Activated B cell treated with CpG ODN at 0.5 μM for 24 hours (primary cell): ENCODE measurements at regions of chr1 and their contacts with region 1.

Region 1: DNA sequence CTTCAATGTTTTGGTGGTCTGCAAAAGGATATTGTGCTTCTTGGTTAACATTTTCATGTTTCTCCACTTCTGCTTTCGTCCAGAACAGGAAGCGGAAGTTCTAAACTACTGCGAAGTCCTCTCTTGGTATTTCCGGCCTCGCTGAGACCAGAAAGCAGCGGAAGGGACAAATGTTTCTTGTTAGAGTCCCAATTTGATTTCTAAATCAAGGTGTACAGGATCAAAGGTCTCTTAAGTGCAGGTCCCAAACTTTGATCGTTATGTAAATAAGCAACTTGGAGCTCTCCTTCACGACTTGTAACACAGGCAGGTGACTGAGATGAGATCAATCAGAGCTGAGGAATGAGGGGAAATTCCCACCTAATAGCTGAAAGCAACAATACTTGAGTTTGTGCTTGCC is 40.1 kb upstream of the HMCN1 start:
- DNase-seq: no peak
- ATAC-seq: peak; percentile 82
- H3K4me3 Mint-ChIP-seq: peak overlapping the region; percentile 86
- H3K27ac Mint-ChIP-seq: peak overlapping the region; percentile 98
- H3K4me1 Mint-ChIP-seq: peaks cover 22% of the 10 kb centered on the region
- H3K27me3 Mint-ChIP-seq: peaks cover 9% of the 10 kb centered on the region
- CTCF ChIP-seq: no peak

Region 2: GRCh38 chr1:184754476-184755225 is 939.4 kb before region 1 on chr1 and contains the start of gene EDEM3:
- CTCF ChIA-PET with region 1: no interaction called
- POLR2A ChIA-PET with region 1: no interaction called
- intact Hi-C with region 1: loop called (anchors 2 kb)
- DNase-seq: peak; percentile 90
- ATAC-seq: peak; percentile 95
- H3K4me3 Mint-ChIP-seq: peak within 1 kb of the TSS; percentile 95
- H3K27ac Mint-ChIP-seq: peak within 1 kb of the TSS; percentile 86
- H3K4me1 Mint-ChIP-seq: peaks cover 23% of the 10 kb centered on the region
- H3K27me3 Mint-ChIP-seq: peaks cover under 1% of the 10 kb centered on the region
- CTCF ChIP-seq: no peak
- total RNA-seq, gene EDEM3: 11.5 and 16.2 TPM in 2 replicates

Region 3: DNA sequence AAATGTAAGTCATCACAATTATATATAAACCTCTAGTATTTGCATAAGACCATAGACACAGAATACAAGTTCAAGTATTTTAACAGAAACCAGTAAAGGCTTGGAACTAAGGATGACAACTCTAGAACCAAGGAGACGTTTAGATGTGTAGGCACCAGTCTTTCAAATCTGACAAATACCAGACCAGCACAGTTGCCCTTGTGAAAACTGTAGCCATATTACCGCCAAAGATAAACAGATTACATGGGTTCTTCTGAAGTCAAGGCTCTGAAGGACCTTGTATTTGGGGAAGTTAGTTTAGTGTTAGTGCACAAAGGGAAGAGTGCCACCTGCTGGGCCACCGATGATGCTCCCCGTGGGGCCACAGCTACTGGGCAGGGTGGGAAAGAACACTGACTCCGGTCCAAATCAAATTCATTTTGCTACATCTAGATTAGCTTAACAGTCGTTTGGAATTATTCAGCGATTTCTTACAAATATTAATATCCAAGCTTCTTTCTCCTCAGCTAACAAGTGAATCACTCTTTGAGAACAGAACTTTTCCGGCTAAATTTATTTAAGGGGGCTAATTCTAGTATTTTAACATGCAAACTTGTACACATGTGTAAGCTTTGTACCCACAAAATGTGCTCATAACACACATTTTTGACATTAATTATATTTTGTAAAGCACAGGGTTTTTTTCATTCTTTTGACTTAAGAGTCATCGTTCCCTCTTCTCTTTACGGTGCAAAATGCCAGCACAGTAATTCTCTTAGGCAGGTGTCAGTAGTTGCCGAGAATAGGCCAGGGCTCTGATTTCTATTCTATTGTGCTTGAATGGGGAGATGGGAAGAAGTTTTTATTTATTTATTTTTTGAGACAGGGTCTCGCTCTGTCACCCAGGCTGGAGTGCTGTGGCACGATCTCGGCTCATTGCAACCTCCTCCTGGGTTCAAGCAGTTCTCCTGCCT is 711.8 kb before region 1 on chr1:
- CTCF ChIA-PET with region 1: interaction called, 3 read pairs
- POLR2A ChIA-PET with region 1: no interaction called
- intact Hi-C with region 1: loop called (anchors 2 kb)
- DNase-seq: peak; percentile 62
- ATAC-seq: peak; percentile 100
- H3K4me3 Mint-ChIP-seq: no peak overlapping the region
- H3K27ac Mint-ChIP-seq: no peak overlapping the region
- H3K4me1 Mint-ChIP-seq: peaks cover 5% of the 10 kb centered on the region
- H3K27me3 Mint-ChIP-seq: no peaks in the 10 kb centered on the region
- CTCF ChIP-seq: no peak

Region 4: DNA sequence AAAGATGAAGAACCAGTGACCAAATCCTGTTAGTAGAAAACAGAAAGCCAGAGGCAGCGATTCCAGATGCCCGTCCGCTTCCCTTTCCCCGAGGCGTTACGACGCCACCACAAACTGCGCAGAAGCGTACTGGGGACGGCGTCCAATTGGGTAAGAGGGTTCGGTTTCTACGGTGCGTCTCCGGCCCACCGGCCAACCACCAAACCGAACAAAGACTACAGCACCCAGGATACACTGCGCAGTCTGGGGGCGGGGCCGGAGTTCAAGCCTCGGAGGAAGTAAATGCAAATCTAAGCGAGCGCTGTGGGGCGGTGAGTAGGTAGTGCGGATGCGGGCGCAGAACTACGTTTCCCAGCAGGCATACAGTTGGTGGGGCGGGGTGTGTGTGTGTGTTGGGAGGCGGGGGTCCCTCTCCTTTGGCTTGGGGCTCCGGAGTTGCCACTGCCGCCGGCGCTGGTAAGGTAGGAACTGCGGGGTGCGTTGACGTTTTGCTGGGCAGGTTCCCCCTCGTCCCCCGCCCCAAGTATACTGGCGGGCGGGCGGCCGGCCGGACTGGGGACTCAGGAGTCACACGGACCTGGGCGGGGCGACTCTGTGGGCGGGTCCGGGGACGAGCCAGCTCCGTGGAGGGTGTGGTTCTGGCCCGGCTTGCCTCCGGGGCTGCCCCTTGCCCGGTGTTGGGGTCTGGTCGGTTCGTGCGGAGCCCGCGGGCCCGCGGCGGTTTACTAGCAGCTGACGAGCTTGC is 537.1 kb before region 1 on chr1 and contains the starts of genes SWT1 and TRMT1L:
- CTCF ChIA-PET with region 1: interaction called, 3 read pairs
- POLR2A ChIA-PET with region 1: interaction called, 11 read pairs
- intact Hi-C with region 1: loop called (anchors 1 kb)
- DNase-seq: peak; percentile 97
- ATAC-seq: peak; percentile 85
- H3K4me3 Mint-ChIP-seq: peak within 1 kb of the TSS; percentile 99
- H3K27ac Mint-ChIP-seq: peak within 1 kb of the TSS; percentile 100
- H3K4me1 Mint-ChIP-seq: peaks cover 50% of the 10 kb centered on the region
- H3K27me3 Mint-ChIP-seq: no peaks in the 10 kb centered on the region
- CTCF ChIP-seq: no peak
- total RNA-seq, gene SWT1: 4.9 and 5.5 TPM in 2 replicates
- total RNA-seq, gene TRMT1L: 20.0 and 23.9 TPM in 2 replicates

Region 5: GRCh38 chr1:185238447-185238846 is 455.6 kb before region 1 on chr1:
- CTCF ChIA-PET with region 1: interaction called, 4 read pairs
- POLR2A ChIA-PET with region 1: no interaction called
- intact Hi-C with region 1: loop called (anchors 1 kb)
- DNase-seq: no peak
- ATAC-seq: no peak
- H3K4me3 Mint-ChIP-seq: no peak overlapping the region
- H3K27ac Mint-ChIP-seq: no peak overlapping the region
- H3K4me1 Mint-ChIP-seq: no peaks in the 10 kb centered on the region
- H3K27me3 Mint-ChIP-seq: no peaks in the 10 kb centered on the region
- CTCF ChIP-seq: no peak

Region 6: DNA sequence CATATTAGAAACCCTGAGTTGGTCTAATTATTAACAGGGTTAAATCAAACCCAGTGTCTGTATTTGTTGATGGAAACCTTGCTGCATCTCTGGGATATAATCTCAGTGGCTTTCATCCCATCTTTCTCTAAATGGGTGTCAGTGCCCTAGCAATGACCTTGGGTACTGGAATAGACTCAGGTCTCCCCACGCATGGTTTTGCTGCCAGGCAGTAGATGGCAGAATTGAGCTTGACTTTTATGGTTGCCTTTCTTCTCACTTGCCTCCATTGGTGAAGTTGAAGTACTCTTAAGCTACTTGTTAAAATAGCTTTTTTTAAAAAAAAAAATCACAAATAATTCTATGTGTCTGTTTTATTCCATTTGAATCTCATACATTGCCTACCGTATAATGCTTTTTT is 41.7 kb before region 1 on chr1:
- CTCF ChIA-PET with region 1: no interaction called
- POLR2A ChIA-PET with region 1: no interaction called
- intact Hi-C with region 1: no loop called
- DNase-seq: no peak
- ATAC-seq: no peak
- H3K4me3 Mint-ChIP-seq: no peak overlapping the region
- H3K27ac Mint-ChIP-seq: no peak overlapping the region
- H3K4me1 Mint-ChIP-seq: no peaks in the 10 kb centered on the region
- H3K27me3 Mint-ChIP-seq: no peaks in the 10 kb centered on the region
- CTCF ChIP-seq: no peak

Region 7: DNA sequence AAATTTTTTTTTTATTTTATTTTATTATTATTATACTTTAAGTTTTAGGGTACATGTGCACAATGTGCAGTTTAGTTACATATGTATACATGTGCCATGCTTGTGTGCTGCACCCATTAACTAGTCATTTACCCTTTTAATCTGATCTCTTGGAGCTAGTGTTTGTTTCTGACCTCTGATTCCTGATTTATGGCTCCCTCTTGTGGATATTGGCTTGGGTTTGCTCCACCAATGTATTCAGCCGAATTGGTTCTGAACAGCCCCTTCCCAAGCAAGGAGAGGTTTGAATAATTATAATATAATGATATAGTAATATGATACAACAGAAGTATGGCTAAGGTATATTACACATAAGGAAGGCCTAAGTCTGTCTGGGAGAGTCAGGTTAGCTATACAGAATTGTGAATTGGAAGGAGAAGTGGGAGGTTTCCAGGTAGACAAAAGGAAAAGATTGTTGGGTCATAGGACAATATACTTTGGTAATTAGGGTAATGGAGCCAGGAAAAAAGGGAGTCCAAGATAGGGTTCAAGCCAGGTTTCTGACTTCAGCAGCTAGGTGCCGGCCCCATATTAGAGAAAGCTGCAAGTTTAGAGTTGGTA is 12.9 kb before region 1 on chr1:
- CTCF ChIA-PET with region 1: interaction called, 16 read pairs
- POLR2A ChIA-PET with region 1: interaction called, 7 read pairs
- intact Hi-C with region 1: no loop called
- DNase-seq: no peak
- ATAC-seq: peak; percentile 67
- H3K4me3 Mint-ChIP-seq: no peak overlapping the region
- H3K27ac Mint-ChIP-seq: no peak overlapping the region
- H3K4me1 Mint-ChIP-seq: peaks cover 19% of the 10 kb centered on the region
- H3K27me3 Mint-ChIP-seq: no peaks in the 10 kb centered on the region
- CTCF ChIP-seq: peak; percentile 50